ENCODE measurements at regions of chr1 and their contacts with region 1.

Region 1: GRCh38 chr1:116139592-116140134 is 28.5 kb downstream of the MAB21L3 start:
- DNase-seq: no peak
- ATAC-seq: no peak
- H3K4me3 ChIP-seq: no peak overlapping the region
- H3K4me3 Mint-ChIP-seq: no peak overlapping the region
- H3K27ac ChIP-seq: no peak overlapping the region
- H3K27ac Mint-ChIP-seq: no peak overlapping the region
- H3K4me1 ChIP-seq: peaks cover 8% of the 10 kb centered on the region
- H3K4me1 Mint-ChIP-seq: peaks cover 6% of the 10 kb centered on the region
- H3K27me3 ChIP-seq: no peaks in the 10 kb centered on the region
- H3K27me3 Mint-ChIP-seq: no peaks in the 10 kb centered on the region
- CTCF ChIP-seq: no peak

Region 2: DNA sequence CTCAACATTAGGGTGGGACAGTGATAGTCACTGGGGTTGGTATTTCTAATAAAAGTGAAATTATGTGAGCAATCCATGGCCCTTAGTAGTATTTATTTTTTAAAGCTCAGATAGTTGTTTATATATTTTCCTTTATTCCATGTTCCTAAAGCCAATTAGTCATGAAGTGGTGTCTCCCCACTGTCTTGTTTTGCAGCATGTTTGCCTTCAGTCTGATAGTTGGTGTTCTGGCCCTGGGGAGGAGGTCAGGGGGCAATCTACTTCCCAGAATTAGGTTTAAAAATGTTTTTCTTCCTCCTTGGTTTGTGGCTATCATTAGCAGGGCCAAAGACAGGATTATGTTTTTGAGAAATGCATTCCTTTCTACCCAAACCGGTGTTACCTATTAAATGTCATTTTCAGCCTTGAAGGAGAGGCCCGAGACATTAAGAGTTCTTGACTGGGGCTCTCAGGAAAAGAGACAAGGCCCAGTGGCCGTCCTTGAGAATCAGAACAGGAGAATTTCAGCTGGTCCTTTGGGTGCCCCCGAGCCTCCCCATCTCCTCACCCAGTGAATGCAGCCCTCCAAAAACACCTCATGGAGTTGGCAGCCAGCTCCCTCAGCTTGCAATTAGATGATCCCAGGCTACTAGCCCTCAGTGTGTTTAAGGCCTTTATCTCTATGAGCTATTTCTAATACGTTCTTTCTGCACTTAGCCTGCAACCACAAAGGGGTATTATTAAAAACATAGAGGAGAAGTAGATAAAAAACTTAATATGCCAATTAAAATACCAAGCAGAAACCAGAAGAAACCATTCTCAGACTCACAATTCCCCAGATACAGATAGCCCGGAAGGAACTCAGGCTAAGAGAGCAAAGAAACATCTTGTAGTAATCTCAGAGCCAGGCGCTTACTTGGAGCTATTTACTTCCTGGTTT is 730.3 kb before region 1 on chr1:
- CTCF ChIA-PET with region 1: no interaction called
- POLR2A ChIA-PET with region 1: no interaction called
- intact Hi-C with region 1: no loop called
- DNase-seq: no peak
- ATAC-seq: no peak
- H3K4me3 ChIP-seq: no peak overlapping the region
- H3K4me3 Mint-ChIP-seq: no peak overlapping the region
- H3K27ac ChIP-seq: no peak overlapping the region
- H3K27ac Mint-ChIP-seq: no peak overlapping the region
- H3K4me1 ChIP-seq: no peaks in the 10 kb centered on the region
- H3K4me1 Mint-ChIP-seq: no peaks in the 10 kb centered on the region
- H3K27me3 ChIP-seq: no peaks in the 10 kb centered on the region
- H3K27me3 Mint-ChIP-seq: peaks cover 27% of the 10 kb centered on the region
- CTCF ChIP-seq: no peak

Region 3: DNA sequence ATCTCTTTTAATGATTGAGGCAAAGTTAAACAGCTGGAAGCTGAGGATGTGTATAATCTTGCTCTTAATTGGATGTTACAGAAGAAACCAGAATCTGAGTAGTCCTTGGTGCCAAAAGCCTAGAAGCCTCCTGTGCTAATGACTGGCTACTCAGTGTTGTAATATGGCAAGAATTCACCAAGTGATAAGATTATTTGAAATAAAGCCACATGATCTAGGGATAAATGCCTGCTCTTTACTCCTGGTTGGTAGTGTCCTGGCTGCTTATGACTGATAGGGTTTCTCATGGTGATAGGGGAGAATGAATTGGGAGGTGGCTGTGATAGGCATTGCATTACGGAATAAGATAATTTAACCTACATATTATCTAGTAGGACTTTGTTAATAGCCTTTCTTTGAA is 42.0 kb before region 1 on chr1:
- CTCF ChIA-PET with region 1: no interaction called
- POLR2A ChIA-PET with region 1: no interaction called
- intact Hi-C with region 1: no loop called
- DNase-seq: no peak
- ATAC-seq: no peak
- H3K4me3 ChIP-seq: no peak overlapping the region
- H3K4me3 Mint-ChIP-seq: no peak overlapping the region
- H3K27ac ChIP-seq: no peak overlapping the region
- H3K27ac Mint-ChIP-seq: no peak overlapping the region
- H3K4me1 ChIP-seq: no peaks in the 10 kb centered on the region
- H3K4me1 Mint-ChIP-seq: no peaks in the 10 kb centered on the region
- H3K27me3 ChIP-seq: peaks cover 3 to 11% of the 10 kb centered on the region in 2 experiments
- H3K27me3 Mint-ChIP-seq: peaks cover 38% of the 10 kb centered on the region
- CTCF ChIP-seq: no peak

Region 4: GRCh38 chr1:116128664-116129063 is 11.0 kb before region 1 on chr1:
- CTCF ChIA-PET with region 1: interaction called, 10 read pairs
- POLR2A ChIA-PET with region 1: no interaction called
- intact Hi-C with region 1: no loop called
- DNase-seq: peak in 4 of 14 experiments; percentile 11 to 32 (median 15)
- ATAC-seq: peak; percentile 83
- H3K4me3 ChIP-seq: no peak overlapping the region
- H3K4me3 Mint-ChIP-seq: peak overlapping the region; percentile 48
- H3K27ac ChIP-seq: no peak overlapping the region
- H3K27ac Mint-ChIP-seq: peak overlapping the region; percentile 10
- H3K4me1 ChIP-seq: peaks cover 23% of the 10 kb centered on the region
- H3K4me1 Mint-ChIP-seq: peaks cover 36% of the 10 kb centered on the region
- H3K27me3 ChIP-seq: peaks cover 0 to 4% of the 10 kb centered on the region in 2 experiments
- H3K27me3 Mint-ChIP-seq: peaks cover under 1% of the 10 kb centered on the region
- CTCF ChIP-seq: no peak

Region 5: DNA sequence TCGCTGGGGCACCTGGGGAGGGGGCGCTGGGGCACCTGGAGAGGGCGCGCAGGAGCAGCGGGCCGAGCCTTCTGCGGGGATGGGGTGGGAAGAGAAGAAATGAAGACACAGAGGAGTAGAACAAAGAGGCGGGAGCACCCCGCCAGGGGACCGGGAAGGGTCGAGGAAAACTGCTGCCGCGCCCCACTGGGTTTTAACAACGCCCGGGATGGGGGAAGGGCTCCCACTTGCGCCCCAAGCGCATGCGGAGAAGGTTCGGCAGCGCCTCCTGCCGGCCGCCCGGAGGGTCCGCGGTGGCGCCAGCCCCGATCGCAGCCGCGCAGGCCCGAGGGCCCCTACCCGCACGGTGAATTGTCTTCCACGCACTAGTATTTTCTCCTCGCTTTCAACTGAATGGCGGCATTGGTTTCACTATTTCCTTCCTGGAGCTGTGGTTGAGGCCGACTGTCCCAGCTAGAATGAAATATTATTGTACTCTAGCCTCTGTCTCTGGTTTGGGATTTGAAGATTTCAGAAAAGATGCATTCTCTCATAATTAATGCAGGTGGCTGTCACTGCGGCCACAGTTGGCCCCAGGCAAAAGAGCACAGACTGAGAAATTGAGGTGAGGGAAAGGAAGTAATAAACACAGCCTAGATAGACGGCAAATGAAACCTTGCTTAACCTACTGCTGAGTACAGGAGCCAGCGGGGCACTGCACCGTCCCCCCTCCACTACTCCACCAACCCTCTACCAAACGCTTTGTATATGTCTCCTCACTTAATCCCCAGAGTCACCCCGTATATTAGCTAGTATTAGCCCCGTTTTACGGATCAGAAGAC is 28.8 kb after region 1 on chr1:
- CTCF ChIA-PET with region 1: interaction called, 34 read pairs
- POLR2A ChIA-PET with region 1: no interaction called
- intact Hi-C with region 1: loop called (anchors 2 kb)
- DNase-seq: peak; percentile 73 to 93 (median 84)
- ATAC-seq: peak; percentile 99
- H3K4me3 ChIP-seq: peak overlapping the region; percentile 63
- H3K4me3 Mint-ChIP-seq: peak overlapping the region; percentile 86
- H3K27ac ChIP-seq: peak overlapping the region in 1 of 2 donors; percentile 26
- H3K27ac Mint-ChIP-seq: peak overlapping the region; percentile 66
- H3K4me1 ChIP-seq: peaks cover 20% of the 10 kb centered on the region
- H3K4me1 Mint-ChIP-seq: peaks cover 21% of the 10 kb centered on the region
- H3K27me3 ChIP-seq: no peaks in the 10 kb centered on the region
- H3K27me3 Mint-ChIP-seq: no peaks in the 10 kb centered on the region
- CTCF ChIP-seq: peak; percentile 94

Region 6: DNA sequence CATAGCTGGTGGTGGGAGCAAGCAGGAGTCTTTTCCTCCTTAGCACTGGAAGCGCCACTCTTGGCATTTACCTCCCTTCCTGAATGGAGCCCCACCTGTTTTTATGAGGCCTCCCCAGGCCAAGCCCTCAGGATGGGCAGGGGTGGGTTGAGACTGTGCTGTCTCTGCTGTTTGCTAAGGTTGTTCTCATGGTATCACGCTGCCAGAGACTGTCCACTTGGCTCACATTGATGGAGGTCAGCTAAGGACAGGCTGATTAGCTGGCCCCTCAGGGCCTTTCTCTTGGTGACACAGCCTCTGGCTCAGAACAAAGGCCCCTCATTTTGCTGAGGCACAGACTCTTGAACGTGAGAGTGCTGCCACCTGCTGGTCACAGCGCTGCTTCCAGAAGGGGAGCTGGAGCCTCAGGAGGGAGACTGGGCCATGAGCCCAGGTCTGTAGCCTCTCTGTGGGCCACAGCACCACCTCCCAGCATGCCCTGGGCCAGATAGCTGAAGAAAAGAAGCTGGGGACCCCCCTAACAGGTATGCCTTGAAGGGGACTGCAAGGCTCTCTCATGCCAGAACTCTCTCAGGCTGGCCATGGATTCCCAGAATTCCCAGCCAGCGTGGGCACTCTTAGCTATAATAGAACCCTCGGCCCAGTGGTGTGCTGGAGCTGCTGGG is 345.5 kb after region 1 on chr1:
- CTCF ChIA-PET with region 1: interaction called, 149 read pairs
- POLR2A ChIA-PET with region 1: interaction called, 32 read pairs
- intact Hi-C with region 1: loop called (anchors 1 kb)
- DNase-seq: peak; percentile 79 to 95 (median 86)
- ATAC-seq: peak; percentile 90
- H3K4me3 ChIP-seq: no peak overlapping the region
- H3K4me3 Mint-ChIP-seq: no peak overlapping the region
- H3K27ac ChIP-seq: no peak overlapping the region
- H3K27ac Mint-ChIP-seq: no peak overlapping the region
- H3K4me1 ChIP-seq: peaks cover 4% of the 10 kb centered on the region
- H3K4me1 Mint-ChIP-seq: no peaks in the 10 kb centered on the region
- H3K27me3 ChIP-seq: no peaks in the 10 kb centered on the region
- H3K27me3 Mint-ChIP-seq: no peaks in the 10 kb centered on the region
- CTCF ChIP-seq: peak; percentile 99

Region 7: DNA sequence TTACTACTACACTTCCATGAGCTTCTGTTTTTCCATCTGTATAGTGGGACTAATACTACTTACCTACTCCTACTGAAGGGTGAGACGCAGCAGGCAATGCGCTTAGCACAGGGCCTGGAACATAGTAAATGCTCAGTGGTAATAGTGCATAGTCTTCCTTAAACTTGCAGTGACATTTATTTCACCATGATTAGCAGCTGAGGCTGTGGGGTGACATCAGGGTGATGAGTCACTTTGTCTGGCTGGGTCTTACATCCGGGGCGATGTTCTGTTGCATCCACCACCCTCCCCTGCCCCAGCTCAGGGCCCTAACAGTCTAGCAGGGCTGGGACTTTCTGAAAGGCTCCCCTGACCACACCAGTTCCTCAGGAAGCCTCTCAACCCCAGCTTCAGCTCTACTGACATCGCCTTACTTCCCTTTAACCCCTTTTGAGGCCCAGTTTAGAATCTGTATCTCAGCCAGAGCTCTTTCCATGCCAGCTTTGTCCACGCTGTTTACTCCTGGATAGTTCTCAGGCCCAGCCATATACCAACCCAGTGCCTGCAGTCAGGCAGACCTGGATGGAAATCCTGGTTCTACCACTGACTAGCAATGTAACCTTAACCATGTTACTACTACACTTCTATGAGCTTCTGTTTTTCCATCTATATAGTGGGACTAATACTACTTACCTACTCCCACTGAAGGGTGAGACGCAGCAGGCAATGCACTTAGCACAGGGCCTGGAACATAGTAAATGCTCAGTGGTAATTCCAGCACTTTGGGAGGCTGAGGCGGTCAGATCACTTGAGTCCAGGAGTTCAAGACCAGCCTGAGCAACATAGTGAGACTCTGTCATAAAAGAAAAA is 364.9 kb after region 1 on chr1:
- CTCF ChIA-PET with region 1: interaction called, 44 read pairs
- POLR2A ChIA-PET with region 1: interaction called, 21 read pairs
- intact Hi-C with region 1: no loop called
- DNase-seq: peak; percentile 67 to 97 (median 81)
- ATAC-seq: peak; percentile 95
- H3K4me3 ChIP-seq: no peak overlapping the region
- H3K4me3 Mint-ChIP-seq: peak overlapping the region; percentile 23
- H3K27ac ChIP-seq: peak overlapping the region; percentile 76
- H3K27ac Mint-ChIP-seq: peak overlapping the region; percentile 89
- H3K4me1 ChIP-seq: peaks cover 64% of the 10 kb centered on the region
- H3K4me1 Mint-ChIP-seq: peaks cover 55% of the 10 kb centered on the region
- H3K27me3 ChIP-seq: no peaks in the 10 kb centered on the region
- H3K27me3 Mint-ChIP-seq: no peaks in the 10 kb centered on the region
- CTCF ChIP-seq: no peak

Measured in CD4-positive, alpha-beta T cell (primary cell).